Dorsolateral prefrontal cortex (tissue), 120 donors: ENCODE measurements at regions of chr13 and their contacts with region 1.

Region 1: DNA sequence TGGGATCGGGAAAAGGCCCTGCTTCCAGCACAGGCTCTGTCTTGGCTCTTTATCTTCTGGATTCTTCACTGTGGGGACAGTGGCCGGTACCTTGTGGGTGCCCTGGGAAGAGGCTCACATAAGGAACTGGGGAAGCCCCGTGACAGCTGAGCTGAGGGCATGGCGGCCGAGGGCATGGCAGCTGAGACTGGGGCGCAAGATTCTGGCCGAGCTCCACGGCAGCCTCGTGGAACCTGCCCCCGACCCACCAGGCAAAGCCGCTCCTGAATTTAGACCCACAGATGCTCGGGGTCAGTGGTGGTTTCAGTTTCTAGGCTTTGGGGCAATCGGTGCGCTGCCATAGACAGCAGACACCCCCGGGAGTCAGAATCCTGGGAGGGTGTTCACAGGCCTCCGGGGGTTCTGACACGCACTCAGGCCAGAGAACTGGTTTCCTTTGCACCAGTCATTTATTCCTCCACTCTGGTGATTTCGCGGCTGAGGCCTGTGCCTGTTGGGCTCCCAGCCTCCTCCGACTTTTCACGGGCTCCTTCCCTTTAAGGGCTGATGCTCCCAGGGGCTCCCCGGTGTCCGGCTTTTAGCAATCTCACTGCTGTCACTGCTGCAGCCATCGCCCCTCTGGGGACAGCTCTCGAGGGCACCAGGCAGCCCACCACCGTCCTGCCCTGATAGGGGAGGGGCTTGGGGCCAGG is 117.6 kb downstream of the TEX29 start:
- DNase-seq: no peak
- H3K4me3 ChIP-seq: no peak overlapping the region
- H3K27ac ChIP-seq: no peak overlapping the region
- H3K27me3 ChIP-seq: peaks cover 0 to 18% (median 0%) of the 10 kb centered on the region in 45 donors
- CTCF ChIP-seq: no peak

Region 2: GRCh38 chr13:111415765-111416164 is 22.2 kb before region 1 on chr13:
- intact Hi-C with region 1: loop called in 1 of 2 experiments (anchors 2 kb)
- DNase-seq: no peak
- H3K4me3 ChIP-seq: no peak overlapping the region
- H3K27ac ChIP-seq: no peak overlapping the region
- H3K27me3 ChIP-seq: peaks cover 0 to 83% (median 34%) of the 10 kb centered on the region in 45 donors
- CTCF ChIP-seq: no peak